Left ventricle myocardium inferior (tissue), 1 donor: ENCODE measurements at regions of chr1 and their contacts with region 1.

Region 1: GRCh38 chr1:205977402-205978014 is 25.7 kb downstream of the RAB7B start:
- DNase-seq: peak; percentile 56
- H3K4me3 ChIP-seq: no peak overlapping the region
- H3K27ac ChIP-seq: peak overlapping the region; percentile 90
- H3K4me1 ChIP-seq: peaks cover 22% of the 10 kb centered on the region
- H3K27me3 ChIP-seq: no peaks in the 10 kb centered on the region
- CTCF ChIP-seq: peak; percentile 97

Region 2: DNA sequence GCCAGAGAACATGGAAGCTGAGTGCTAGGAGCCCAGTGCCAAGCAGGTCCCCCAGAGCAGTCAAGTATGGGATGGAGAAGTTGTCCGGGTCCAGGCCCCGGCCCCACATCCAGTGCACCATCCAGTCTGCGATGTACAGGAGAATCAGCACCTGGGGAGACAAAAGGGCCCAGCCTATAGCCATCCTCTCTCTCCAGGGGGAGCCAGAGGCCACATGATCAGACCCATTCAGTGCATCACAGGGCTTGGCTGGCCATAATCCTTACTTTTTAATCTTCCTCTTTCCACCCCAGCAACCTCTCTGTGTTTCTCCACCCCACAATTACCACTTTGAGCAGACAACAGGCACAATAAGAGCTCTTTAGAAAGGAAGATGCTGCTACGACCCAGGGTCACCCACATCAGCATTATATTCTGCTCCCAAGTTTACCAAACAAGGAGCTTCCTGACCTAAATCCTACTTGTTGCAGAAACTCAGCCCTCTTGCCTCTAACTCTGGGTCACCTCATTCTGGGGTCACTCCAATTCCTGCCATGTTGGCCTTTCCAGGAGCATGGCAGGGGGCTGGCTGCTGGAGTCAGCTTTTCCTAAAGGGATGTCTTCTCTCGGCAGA is 185.8 kb before region 1 on chr1:
- intact Hi-C with region 1: loop called (anchors 5 kb)
- DNase-seq: peak; percentile 55
- H3K4me3 ChIP-seq: no peak overlapping the region
- H3K27ac ChIP-seq: peak overlapping the region; percentile 82
- H3K4me1 ChIP-seq: peaks cover 32% of the 10 kb centered on the region
- H3K27me3 ChIP-seq: no peaks in the 10 kb centered on the region
- CTCF ChIP-seq: peak; percentile 77

Region 3: GRCh38 chr1:205840146-205840923 is 137.2 kb before region 1 on chr1:
- intact Hi-C with region 1: no loop called
- DNase-seq: no peak
- H3K4me3 ChIP-seq: no peak overlapping the region
- H3K27ac ChIP-seq: peak overlapping the region; percentile 16
- H3K4me1 ChIP-seq: peaks cover 35% of the 10 kb centered on the region
- H3K27me3 ChIP-seq: no peaks in the 10 kb centered on the region
- CTCF ChIP-seq: no peak

Region 4: DNA sequence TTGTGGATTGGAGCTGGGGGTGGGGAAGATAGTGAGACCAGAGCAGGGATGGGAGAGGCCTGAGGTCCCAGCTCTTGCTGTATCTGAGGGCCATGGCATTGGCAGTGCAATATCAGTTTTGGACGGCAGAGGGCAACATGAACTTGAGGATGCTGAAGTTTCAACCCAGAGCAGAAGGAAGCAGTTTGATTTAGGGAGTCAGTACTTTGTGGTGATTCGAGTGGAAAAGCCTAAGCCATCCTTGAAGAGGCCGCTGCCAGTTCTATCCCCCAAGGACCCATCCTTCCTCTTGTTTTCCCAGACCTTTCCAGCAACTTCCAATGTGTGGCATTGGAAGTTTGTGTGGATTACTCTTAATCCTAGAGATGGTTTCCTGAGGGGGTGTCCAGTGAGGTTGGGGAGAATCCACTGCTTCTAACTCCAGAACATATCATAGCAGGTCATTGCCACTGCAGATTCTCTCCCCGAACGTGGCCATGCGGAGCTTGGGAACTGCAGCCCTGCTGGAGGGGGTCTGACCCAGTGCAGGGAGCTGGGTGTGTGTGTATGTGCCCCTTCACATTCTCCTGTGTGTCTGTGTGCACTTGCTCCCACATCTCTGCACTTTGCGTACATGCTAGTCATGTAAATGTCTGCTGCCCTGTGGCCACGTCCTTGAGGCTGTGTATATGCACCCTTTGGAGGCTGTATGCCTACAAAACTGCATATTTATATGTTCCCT is 58.3 kb before region 1 on chr1:
- intact Hi-C with region 1: loop called (anchors 1 kb)
- DNase-seq: peak; percentile 84
- H3K4me3 ChIP-seq: peak overlapping the region; percentile 48
- H3K27ac ChIP-seq: peak overlapping the region; percentile 93
- H3K4me1 ChIP-seq: peaks cover 47% of the 10 kb centered on the region
- H3K27me3 ChIP-seq: no peaks in the 10 kb centered on the region
- CTCF ChIP-seq: peak; percentile 96